Endothelial cell of umbilical vein (primary cell): ENCODE measurements at regions of chr6 and their contacts with region 1.

Region 1: DNA sequence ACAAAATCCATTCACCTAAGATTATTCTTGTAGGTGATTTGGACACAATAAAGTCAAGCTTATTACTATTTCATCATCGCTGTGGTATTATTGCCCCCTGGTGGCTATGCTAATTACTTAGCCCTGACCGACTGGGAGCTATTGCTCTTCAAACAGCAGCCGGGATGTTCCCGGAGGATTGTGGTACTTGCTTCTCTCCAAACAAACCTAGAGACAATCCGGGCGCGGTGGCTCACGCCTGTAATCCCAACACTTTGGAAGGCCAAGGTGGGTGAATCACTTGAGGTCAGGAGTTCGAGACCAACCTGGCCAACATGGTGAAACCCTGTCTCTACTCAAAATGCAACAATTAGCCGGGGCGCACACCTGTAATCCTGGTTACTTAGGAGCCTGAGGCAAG is 15.4 kb upstream of the STMND1 start:
- DNase-seq: peak; percentile 76
- H3K4me3 ChIP-seq: no peak overlapping the region
- H3K27ac ChIP-seq: no peak overlapping the region
- H3K4me1 ChIP-seq: no peaks in the 10 kb centered on the region
- H3K27me3 ChIP-seq: peaks cover 7 to 17% of the 10 kb centered on the region in 2 experiments
- CTCF ChIP-seq: peak; percentile 60 to 61
- POLR2A ChIP-seq: no peak

Region 2: DNA sequence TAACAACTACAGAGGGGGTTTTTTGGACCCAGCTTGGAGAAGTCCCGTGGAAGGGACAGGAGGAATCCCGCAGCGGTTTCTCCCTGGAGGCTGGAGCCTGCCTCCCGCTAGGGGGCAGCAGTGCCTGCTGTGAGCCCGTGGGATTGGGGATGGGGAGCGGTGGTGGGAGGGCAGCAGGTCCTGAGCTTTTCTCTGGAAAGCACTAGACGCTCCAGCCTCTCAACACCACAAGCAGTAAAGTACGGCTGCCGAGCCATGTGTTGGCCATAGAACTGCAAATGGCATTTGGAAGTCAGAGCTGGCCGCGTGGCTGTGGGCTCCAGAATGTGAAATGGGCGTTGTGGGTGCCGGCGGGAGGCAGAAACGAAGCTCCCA is 800.3 kb before region 1 on chr6:
- CTCF ChIA-PET with region 1: interaction called, 13 read pairs
- POLR2A ChIA-PET with region 1: no interaction called
- dilution Hi-C with region 1: no loop called
- intact Hi-C with region 1: no loop called
- DNase-seq: peak; percentile 19
- H3K4me3 ChIP-seq: no peak overlapping the region
- H3K27ac ChIP-seq: no peak overlapping the region
- H3K4me1 ChIP-seq: peaks cover 2% of the 10 kb centered on the region
- H3K27me3 ChIP-seq: no peaks in the 10 kb centered on the region
- CTCF ChIP-seq: peak; percentile 64 to 82
- POLR2A ChIP-seq: no peak

Region 3: DNA sequence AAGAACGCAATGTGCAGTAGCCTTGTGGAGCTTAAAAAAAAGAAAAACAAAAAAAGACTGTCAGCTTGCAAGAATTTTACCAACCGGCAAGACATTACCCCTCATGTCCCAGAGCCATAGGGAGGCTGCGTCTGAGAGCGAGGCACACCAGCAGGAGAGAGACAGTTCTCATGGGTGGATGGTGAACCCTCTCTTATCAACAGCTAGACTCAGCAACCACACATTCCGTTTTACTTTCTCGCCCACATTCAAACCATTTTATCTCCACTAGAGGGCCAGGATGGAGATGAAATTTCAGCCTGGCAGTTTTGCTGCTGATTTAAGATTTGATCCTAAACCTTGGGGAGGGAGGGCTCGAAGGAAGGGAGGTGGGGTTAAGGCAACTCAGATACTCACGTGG is 572.2 kb before region 1 on chr6:
- CTCF ChIA-PET with region 1: interaction called, 14 read pairs
- POLR2A ChIA-PET with region 1: no interaction called
- dilution Hi-C with region 1: no loop called
- intact Hi-C with region 1: loop called (anchors 2 kb)
- DNase-seq: peak; percentile 60
- H3K4me3 ChIP-seq: no peak overlapping the region
- H3K27ac ChIP-seq: no peak overlapping the region
- H3K4me1 ChIP-seq: peaks cover 6% of the 10 kb centered on the region
- H3K27me3 ChIP-seq: no peaks in the 10 kb centered on the region
- CTCF ChIP-seq: peak; percentile 36 to 55
- POLR2A ChIP-seq: no peak

Region 4: GRCh38 chr6:16832043-16832567 is 254.4 kb before region 1 on chr6:
- CTCF ChIA-PET with region 1: interaction called, 11 read pairs
- POLR2A ChIA-PET with region 1: no interaction called
- dilution Hi-C with region 1: no loop called
- intact Hi-C with region 1: no loop called
- DNase-seq: no peak
- H3K4me3 ChIP-seq: no peak overlapping the region
- H3K27ac ChIP-seq: no peak overlapping the region
- H3K4me1 ChIP-seq: no peaks in the 10 kb centered on the region
- H3K27me3 ChIP-seq: peaks cover 0 to 2% of the 10 kb centered on the region in 2 experiments
- CTCF ChIP-seq: no peak
- POLR2A ChIP-seq: no peak

Region 5: GRCh38 chr6:16964553-16965501 is 121.6 kb before region 1 on chr6:
- CTCF ChIA-PET with region 1: interaction called, 64 read pairs
- POLR2A ChIA-PET with region 1: no interaction called
- dilution Hi-C with region 1: no loop called
- intact Hi-C with region 1: loop called (anchors 1 kb)
- DNase-seq: peak; percentile 66
- H3K4me3 ChIP-seq: no peak overlapping the region
- H3K27ac ChIP-seq: no peak overlapping the region
- H3K4me1 ChIP-seq: peaks cover 11% of the 10 kb centered on the region
- H3K27me3 ChIP-seq: peaks cover 0 to 2% of the 10 kb centered on the region in 2 experiments
- CTCF ChIP-seq: peak; percentile 94 to 97
- POLR2A ChIP-seq: no peak

Region 6: DNA sequence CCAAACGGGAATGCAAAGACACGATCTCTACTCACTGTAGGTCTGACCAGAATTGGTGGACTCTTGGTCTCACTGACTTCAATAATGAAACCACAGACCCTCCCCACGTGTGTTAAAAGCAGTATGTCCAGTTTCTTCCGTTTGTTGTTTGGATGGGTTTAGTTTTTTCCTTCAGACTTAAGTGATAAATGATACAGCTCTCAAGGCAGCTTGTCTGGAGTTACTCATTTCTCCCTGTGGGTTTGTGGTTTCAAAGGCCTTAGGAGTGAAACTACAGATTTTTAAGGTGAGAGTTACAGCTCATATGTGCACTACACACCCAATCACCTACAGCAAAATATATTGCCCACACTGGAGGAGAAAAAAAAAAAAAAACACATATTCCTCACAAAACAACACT is 71.3 kb before region 1 on chr6:
- CTCF ChIA-PET with region 1: interaction called, 50 read pairs
- POLR2A ChIA-PET with region 1: interaction called, 3 read pairs
- dilution Hi-C with region 1: no loop called
- intact Hi-C with region 1: loop called (anchors 1 kb)
- DNase-seq: no peak
- H3K4me3 ChIP-seq: no peak overlapping the region
- H3K27ac ChIP-seq: no peak overlapping the region
- H3K4me1 ChIP-seq: peaks cover 22% of the 10 kb centered on the region
- H3K27me3 ChIP-seq: no peaks in the 10 kb centered on the region
- CTCF ChIP-seq: no peak
- POLR2A ChIP-seq: no peak

Region 7: DNA sequence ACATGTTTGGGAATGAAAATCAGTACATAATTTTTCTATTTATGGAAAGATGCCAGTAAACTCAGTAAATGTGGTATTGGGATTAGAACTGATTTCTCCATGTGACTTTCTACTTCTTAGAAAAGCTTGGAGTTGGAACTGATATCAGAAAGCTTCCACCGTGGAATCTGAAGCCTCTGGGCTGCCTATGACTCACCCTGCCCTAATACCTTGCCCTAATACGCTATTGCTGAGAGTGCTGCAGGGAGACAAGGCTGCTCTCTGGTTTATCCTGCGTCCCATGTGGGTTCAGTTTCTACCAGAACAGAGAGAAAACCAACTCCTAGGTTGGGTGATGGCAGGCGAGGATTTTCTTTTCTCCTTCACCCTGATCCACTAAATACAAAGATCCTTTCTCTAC is 12.1 kb after region 1 on chr6:
- CTCF ChIA-PET with region 1: interaction called, 17 read pairs
- POLR2A ChIA-PET with region 1: no interaction called
- dilution Hi-C with region 1: no loop called
- intact Hi-C with region 1: no loop called
- DNase-seq: no peak
- H3K4me3 ChIP-seq: no peak overlapping the region
- H3K27ac ChIP-seq: no peak overlapping the region
- H3K4me1 ChIP-seq: peaks cover 5% of the 10 kb centered on the region
- H3K27me3 ChIP-seq: peaks cover 23 to 40% of the 10 kb centered on the region in 2 experiments
- CTCF ChIP-seq: no peak
- POLR2A ChIP-seq: no peak